ENCODE measurements at regions of chr3 and their contacts with region 1.

Region 1: DNA sequence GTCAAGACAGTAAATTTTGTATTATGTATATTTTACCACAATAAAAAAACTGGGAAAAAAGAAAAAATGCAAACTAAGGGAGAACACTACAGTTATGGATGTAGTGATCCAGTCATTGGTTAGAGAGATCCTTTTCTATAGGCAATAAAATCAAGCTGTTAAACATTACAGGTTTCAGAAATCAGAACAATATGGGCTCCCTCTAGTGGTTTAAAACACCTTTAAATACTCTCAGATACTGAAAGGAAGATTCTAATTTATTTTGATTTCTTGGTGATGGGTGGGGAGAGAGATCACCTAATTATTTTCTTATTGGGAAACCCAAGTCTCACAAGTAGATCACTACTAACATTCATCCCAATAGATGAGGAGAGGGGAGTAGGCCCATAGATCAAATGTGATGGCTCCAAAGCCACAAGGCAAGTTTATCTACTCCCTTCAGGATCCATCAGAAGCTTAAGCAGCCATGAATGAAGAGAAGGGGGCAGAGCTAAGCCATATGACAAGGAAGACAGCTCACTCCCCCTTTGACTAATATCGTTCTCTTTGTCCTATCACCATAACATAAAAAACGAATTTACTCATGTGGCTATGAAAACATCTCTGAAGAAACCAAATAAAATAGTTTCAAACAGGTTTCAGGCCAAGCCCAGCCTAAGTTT is 118.6 kb downstream of the ANO10 start:
- DNase-seq: peak; percentile 46
- ATAC-seq: peak; percentile 75
- H3K4me3 ChIP-seq: no peak overlapping the region
- H3K27ac ChIP-seq: no peak overlapping the region
- H3K4me1 ChIP-seq: peaks cover 6% of the 10 kb centered on the region
- H3K27me3 ChIP-seq: no peaks in the 10 kb centered on the region
- CTCF ChIP-seq: peak; percentile 59
- POLR2A ChIP-seq: no peak
- RAD21 ChIP-seq: peak; percentile 50

Region 2: GRCh38 chr3:42290966-42291714 is 1212.1 kb before region 1 on chr3:
- CTCF ChIA-PET with region 1: no interaction called
- POLR2A ChIA-PET with region 1: no interaction called
- dilution Hi-C with region 1: no loop called
- in situ Hi-C with region 1: no loop called
- intact Hi-C with region 1: no loop called
- DNase-seq: no peak
- ATAC-seq: no peak
- H3K4me3 ChIP-seq: no peak overlapping the region
- H3K27ac ChIP-seq: no peak overlapping the region
- H3K4me1 ChIP-seq: no peaks in the 10 kb centered on the region
- H3K27me3 ChIP-seq: no peaks in the 10 kb centered on the region
- CTCF ChIP-seq: no peak
- POLR2A ChIP-seq: no peak
- RAD21 ChIP-seq: no peak

Region 3: DNA sequence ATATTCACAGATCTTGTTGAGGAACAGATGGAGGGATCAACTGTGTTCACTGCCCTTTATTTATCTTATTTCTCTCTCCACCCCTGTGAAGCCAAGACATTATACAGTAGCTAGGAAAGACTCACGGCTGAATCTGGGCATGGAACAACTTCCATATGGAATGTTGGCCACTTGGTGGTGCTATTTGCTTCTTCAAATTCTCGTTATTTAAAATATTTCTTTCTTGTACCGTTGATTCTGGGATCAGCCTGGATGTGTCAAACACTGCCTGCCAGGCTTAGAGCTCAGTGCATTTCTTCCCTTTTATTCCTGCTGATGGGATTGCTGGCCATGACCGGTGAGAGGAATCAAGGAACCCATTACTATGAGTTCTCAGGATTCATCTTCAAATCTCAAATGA is 541.6 kb before region 1 on chr3:
- CTCF ChIA-PET with region 1: no interaction called
- POLR2A ChIA-PET with region 1: no interaction called
- dilution Hi-C with region 1: no loop called
- in situ Hi-C with region 1: loop called (anchors 10 kb)
- intact Hi-C with region 1: loop called (anchors 5 kb)
- DNase-seq: peak; percentile 56
- ATAC-seq: peak; percentile 87
- H3K4me3 ChIP-seq: no peak overlapping the region
- H3K27ac ChIP-seq: no peak overlapping the region
- H3K4me1 ChIP-seq: no peaks in the 10 kb centered on the region
- H3K27me3 ChIP-seq: no peaks in the 10 kb centered on the region; the same call in 1 of the 2 replicates
- CTCF ChIP-seq: peak; percentile 65
- POLR2A ChIP-seq: no peak
- RAD21 ChIP-seq: peak; percentile 62

Region 4: GRCh38 chr3:43162230-43163084 is 340.7 kb before region 1 on chr3:
- CTCF ChIA-PET with region 1: interaction called, 5 read pairs
- POLR2A ChIA-PET with region 1: no interaction called
- dilution Hi-C with region 1: no loop called
- in situ Hi-C with region 1: loop called (anchors 10 kb)
- intact Hi-C with region 1: loop called (anchors 1 kb)
- DNase-seq: peak; percentile 78
- ATAC-seq: peak; percentile 84
- H3K4me3 ChIP-seq: no peak overlapping the region
- H3K27ac ChIP-seq: no peak overlapping the region
- H3K4me1 ChIP-seq: peaks cover 2% of the 10 kb centered on the region; the same call in 1 of the 2 replicates
- H3K27me3 ChIP-seq: no peaks in the 10 kb centered on the region
- CTCF ChIP-seq: peak; percentile 62
- POLR2A ChIP-seq: no peak
- RAD21 ChIP-seq: peak; percentile 73

Region 5: GRCh38 chr3:43223670-43224364 is 279.4 kb before region 1 on chr3:
- CTCF ChIA-PET with region 1: interaction called, 4 read pairs
- POLR2A ChIA-PET with region 1: no interaction called
- dilution Hi-C with region 1: no loop called
- in situ Hi-C with region 1: no loop called
- intact Hi-C with region 1: loop called (anchors 2 kb)
- DNase-seq: peak; percentile 27
- ATAC-seq: peak; percentile 27; the same call in 1 of the 2 replicates
- H3K4me3 ChIP-seq: no peak overlapping the region
- H3K27ac ChIP-seq: no peak overlapping the region
- H3K4me1 ChIP-seq: no peaks in the 10 kb centered on the region
- H3K27me3 ChIP-seq: peaks cover 6% of the 10 kb centered on the region; the same call in 1 of the 2 replicates
- CTCF ChIP-seq: peak; percentile 64
- POLR2A ChIP-seq: no peak
- RAD21 ChIP-seq: peak; percentile 70

Region 6: GRCh38 chr3:43286115-43286840 is 216.9 kb before region 1 on chr3 and contains the start of gene SNRK:
- CTCF ChIA-PET with region 1: no interaction called
- POLR2A ChIA-PET with region 1: no interaction called
- dilution Hi-C with region 1: no loop called
- in situ Hi-C with region 1: no loop called
- intact Hi-C with region 1: loop called (anchors 2 kb)
- DNase-seq: peak; percentile 64
- ATAC-seq: peak; percentile 92
- H3K4me3 ChIP-seq: peak within 1 kb of the TSS; percentile 99
- H3K27ac ChIP-seq: peak within 1 kb of the TSS; percentile 51
- H3K4me1 ChIP-seq: peaks cover 11% of the 10 kb centered on the region
- H3K27me3 ChIP-seq: peaks cover 10% of the 10 kb centered on the region
- CTCF ChIP-seq: peak; percentile 26; the same call in 1 of the 2 replicates
- POLR2A ChIP-seq: peak; percentile 71
- RAD21 ChIP-seq: no peak
- total RNA-seq, gene SNRK: 20.6 and 23.1 TPM in 2 replicates

Region 7: GRCh38 chr3:43676441-43676840 is 173.2 kb after region 1 on chr3:
- CTCF ChIA-PET with region 1: no interaction called
- POLR2A ChIA-PET with region 1: no interaction called
- dilution Hi-C with region 1: no loop called
- in situ Hi-C with region 1: no loop called
- intact Hi-C with region 1: no loop called
- DNase-seq: no peak
- ATAC-seq: no peak
- H3K4me3 ChIP-seq: no peak overlapping the region
- H3K27ac ChIP-seq: no peak overlapping the region
- H3K4me1 ChIP-seq: no peaks in the 10 kb centered on the region
- H3K27me3 ChIP-seq: no peaks in the 10 kb centered on the region
- CTCF ChIP-seq: no peak
- POLR2A ChIP-seq: no peak
- RAD21 ChIP-seq: no peak